PC-9 (cell line): ENCODE measurements at regions of chr19 and their contacts with region 1.

Region 1: GRCh38 chr19:1789261-1790041 is 22.6 kb downstream of the ATP8B3 start:
- DNase-seq: peak in 1 of 2 experiments; percentile 17
- H3K4me3 ChIP-seq: no peak overlapping the region; the same call in 1 of the 2 replicates
- H3K27ac ChIP-seq: no peak overlapping the region
- H3K4me1 ChIP-seq: no peaks in the 10 kb centered on the region
- H3K27me3 ChIP-seq: no peaks in the 10 kb centered on the region
- CTCF ChIP-seq: no peak

Region 2: DNA sequence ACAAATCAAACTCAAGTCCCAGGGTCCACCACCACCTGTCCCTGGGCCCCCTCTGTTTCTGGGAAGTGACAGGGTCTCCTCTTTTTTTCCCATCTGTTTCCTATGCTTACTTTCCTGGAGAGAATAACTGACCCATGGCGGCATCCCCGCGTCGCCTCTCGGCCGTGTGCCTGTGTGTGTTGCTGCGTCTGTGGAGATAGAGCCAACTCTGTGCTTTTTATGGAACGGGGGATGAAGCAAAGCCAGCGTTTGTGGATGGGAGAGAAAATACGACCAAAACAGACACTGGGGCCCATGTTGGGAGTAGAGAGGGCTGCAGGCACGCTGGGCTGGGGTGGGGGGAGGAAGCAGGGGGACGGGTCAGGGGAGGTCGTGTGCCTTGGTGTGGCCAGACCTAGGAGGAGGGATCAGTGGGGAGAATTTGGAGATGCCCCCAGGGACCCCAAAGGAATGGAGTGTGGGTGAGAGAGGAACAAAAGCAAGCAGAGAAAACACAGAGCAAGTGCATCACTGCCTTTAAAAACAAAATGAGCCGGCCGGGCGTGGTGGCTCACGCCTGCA is 249.0 kb before region 1 on chr19:
- CTCF ChIA-PET with region 1: no interaction called
- POLR2A ChIA-PET with region 1: no interaction called
- intact Hi-C with region 1: loop called (anchors 10 kb)
- DNase-seq: no peak
- H3K4me3 ChIP-seq: no peak overlapping the region
- H3K27ac ChIP-seq: no peak overlapping the region
- H3K4me1 ChIP-seq: no peaks in the 10 kb centered on the region
- H3K27me3 ChIP-seq: no peaks in the 10 kb centered on the region
- CTCF ChIP-seq: no peak

Region 3: DNA sequence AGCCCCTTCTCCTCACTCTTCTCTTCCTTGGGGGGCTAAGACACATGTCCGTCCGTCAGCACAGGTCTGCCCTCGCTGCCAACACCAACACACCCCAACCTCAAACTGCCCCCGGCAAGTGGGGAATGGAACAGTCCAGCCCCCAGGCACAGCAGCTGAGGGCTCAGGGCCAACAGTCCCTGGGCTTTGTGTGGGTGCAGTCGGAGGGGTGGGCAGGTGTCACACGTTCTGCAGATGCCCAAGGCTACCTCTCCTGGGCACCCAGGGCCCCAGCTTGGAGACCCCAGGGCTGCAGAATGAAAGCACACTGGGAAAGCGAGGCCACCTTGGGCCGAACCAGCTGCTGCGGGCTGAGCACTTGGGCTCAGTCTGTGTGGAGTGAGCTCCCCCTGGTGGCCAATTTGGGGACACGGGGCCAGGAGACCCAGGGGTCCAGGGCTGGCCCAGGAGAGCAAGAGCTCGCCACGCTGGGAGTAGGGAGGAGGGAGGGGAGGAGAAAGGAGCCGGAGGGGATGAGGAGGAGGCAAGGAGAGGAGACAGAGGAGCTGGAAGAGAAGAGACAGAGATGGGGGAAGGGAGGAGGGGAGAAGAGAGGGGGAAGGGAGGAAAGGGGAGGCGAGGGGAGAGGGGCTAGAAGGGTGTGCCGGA is 36.6 kb after region 1 on chr19:
- CTCF ChIA-PET with region 1: no interaction called
- POLR2A ChIA-PET with region 1: no interaction called
- intact Hi-C with region 1: no loop called
- DNase-seq: peak in 1 of 2 experiments; percentile 52
- H3K4me3 ChIP-seq: no peak overlapping the region
- H3K27ac ChIP-seq: no peak overlapping the region
- H3K4me1 ChIP-seq: no peaks in the 10 kb centered on the region
- H3K27me3 ChIP-seq: no peaks in the 10 kb centered on the region
- CTCF ChIP-seq: peak; percentile 84